OCI-LY7 (cell line): ENCODE measurements at regions of chr5 and their contacts with region 1.

Region 1: GRCh38 chr5:115841382-115842088 is at the starts of genes AP3S1 and ATG12:
- DNase-seq: peak; percentile 95
- H3K4me3 ChIP-seq: peak within 1 kb of the TSS; percentile 90
- H3K27ac ChIP-seq: peak within 1 kb of the TSS; percentile 80
- H3K4me1 ChIP-seq: peaks cover 57% of the 10 kb centered on the region
- CTCF ChIP-seq: no peak
- total RNA-seq, gene AP3S1: 76.0 and 111 TPM in 2 replicates
- total RNA-seq, gene ATG12: 38.0 and 52.1 TPM in 2 replicates

Region 2: DNA sequence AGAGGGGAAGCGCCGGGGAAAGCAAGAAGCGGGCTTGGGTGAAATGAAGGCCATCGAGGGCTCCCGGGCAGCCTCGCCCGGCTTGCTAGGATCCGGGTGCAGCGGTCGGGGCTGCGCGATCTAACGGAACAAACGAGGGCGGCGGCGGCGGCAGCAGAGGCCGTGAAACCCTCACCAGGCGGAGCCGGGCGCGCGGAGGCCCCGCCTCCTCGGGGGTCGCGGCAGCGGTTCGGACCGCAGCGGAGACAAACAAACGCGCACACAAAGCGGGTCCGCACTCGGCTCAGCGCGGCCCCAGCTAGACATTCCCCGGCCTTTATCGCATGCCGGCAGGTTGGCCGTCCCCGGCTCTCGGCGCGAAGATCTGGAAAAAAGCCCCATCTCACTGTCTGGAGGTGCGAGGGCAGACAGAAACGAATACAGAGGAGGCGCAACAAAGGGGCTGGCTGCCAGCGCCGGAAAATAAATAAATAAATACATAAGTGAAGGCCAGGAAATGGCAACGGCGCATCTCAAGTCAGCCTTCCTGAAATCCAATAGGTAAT is 661.3 kb before region 1 on chr5:
- CTCF ChIA-PET with region 1: no interaction called
- POLR2A ChIA-PET with region 1: no interaction called
- intact Hi-C with region 1: no loop called
- DNase-seq: no peak
- H3K4me3 ChIP-seq: peak overlapping the region; percentile 36
- H3K27ac ChIP-seq: no peak overlapping the region
- H3K4me1 ChIP-seq: peaks cover 5% of the 10 kb centered on the region
- CTCF ChIP-seq: no peak

Region 3: DNA sequence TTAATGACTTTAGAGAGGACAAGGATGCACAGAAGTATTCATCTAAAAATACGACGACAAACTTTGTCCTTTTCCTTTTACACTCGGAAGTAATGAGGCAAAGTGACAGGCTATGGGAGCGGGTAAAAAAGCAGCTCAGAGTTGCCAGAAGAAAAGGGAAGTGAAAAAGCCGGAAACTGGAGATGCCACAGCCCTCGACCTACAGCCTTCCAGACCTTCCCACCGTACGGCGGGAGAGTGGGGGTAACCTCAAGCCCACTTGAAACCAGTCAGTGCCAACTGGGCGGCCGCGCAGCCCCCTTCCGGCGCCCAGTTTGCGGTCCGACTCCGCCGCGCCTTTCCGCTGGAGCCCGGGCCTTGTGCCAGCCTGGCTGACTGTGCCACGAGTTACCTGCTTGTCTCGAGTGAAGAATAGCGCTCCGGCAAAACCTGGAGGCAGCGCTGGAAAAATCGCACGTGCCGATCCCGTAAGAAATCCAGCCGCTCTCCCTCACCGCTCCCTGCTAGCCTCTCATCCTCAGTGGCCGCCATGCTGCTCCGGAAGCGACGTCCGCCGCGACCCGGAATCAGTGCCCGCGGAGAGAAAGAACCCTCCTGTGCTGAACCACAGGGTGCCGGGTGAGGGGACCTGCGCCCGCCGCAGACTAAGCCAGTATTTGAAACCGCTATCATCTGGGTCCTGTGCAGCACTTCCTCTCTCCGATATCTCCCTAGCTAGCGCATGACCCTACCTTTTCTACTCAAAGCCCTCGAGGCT is 579.0 kb before region 1 on chr5 and contains the start of gene PGGT1B:
- CTCF ChIA-PET with region 1: no interaction called
- POLR2A ChIA-PET with region 1: no interaction called
- intact Hi-C with region 1: loop called (anchors 2 kb)
- DNase-seq: peak; percentile 82
- H3K4me3 ChIP-seq: peak within 1 kb of the TSS; percentile 83
- H3K27ac ChIP-seq: peak within 1 kb of the TSS; percentile 70
- H3K4me1 ChIP-seq: peaks cover 34% of the 10 kb centered on the region
- CTCF ChIP-seq: no peak
- total RNA-seq, gene PGGT1B: 17.8 and 19.7 TPM in 2 replicates

Region 4: DNA sequence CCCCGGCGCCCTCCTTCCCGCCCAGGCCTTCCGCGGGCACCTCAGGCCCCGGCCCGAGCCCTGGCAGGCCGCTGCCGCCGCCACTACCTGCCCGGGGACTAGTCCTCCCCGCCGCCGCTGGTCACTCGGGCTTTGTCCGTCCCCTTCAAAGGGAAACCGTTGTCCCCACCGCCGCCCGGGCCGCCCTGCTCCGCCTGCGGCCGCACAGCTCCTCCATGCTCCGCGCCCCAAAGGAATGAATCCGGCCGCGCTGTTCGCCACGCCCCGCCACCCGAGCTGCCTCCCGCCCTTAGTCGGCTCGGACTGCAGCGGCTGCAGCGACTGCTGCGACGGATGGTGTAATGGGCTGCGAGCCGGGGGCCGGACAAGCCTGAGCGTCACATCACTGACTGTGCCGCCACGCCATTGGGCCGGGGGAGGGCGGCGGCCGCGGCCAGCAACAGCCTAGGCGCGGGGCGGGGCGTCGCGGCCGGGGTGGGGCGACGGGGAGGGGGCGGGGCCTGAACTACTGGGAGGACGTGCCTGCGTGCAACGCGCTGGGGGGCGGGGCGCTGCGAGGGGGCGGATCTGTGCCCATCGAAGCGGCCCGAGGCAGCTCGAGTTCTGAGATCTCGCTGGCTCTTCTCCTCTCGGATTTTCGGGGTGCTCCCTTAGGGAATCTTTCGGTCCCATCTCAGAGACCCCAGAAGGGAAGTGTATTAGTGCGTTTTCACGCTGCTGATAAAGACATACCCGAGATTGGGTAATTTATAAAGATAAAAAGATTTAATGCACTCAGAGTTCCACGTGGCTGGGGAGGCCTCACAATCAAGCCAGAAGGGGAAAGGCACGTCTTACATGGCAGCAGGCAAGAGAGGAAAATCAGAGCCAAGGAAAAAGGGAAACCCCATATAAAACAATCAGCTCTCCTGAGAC is 296.8 kb before region 1 on chr5 and contains the start of gene FEM1C:
- CTCF ChIA-PET with region 1: no interaction called
- POLR2A ChIA-PET with region 1: interaction called, 5 read pairs
- intact Hi-C with region 1: loop called (anchors 2 kb)
- DNase-seq: peak; percentile 96
- H3K4me3 ChIP-seq: peak within 1 kb of the TSS; percentile 92
- H3K27ac ChIP-seq: peak within 1 kb of the TSS; percentile 79
- H3K4me1 ChIP-seq: peaks cover 29% of the 10 kb centered on the region
- CTCF ChIP-seq: no peak
- total RNA-seq, gene FEM1C: 4.6 and 5.6 TPM in 2 replicates

Region 5: DNA sequence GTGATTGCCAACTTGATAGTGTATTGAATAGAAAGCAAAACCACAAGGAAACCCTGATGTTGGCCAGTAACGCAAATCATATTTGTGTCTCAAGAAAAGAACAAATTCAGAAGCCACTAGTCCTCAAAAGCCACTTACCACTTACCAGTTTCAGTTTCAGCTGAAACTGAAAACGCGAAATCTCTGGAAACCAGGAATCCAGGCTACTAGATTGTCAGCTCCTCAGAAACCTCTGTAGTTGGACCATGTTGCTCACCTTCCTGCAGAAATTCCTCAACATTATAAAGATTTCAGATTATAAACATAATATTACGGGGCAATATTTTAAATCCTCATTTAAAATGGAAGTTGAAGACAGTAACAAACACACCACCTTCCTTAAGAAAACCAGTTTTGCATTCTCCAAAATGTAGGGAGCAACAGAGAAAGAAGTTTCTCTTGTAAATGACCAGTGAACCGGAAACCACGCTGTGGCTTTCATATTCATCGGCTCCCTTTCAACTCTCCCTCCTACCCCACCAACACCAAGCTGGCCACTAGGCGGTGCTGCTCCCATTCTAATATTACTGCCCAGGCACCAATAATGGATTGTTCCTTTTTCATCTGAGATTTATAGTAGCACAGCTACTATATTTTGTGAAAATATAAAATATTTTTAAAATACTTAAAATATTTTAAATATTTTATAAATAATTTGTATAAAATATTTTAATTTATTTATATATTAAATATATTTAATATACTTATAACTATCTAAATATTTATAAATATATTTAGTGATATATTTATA is 207.0 kb before region 1 on chr5:
- CTCF ChIA-PET with region 1: no interaction called
- POLR2A ChIA-PET with region 1: interaction called, 6 read pairs
- intact Hi-C with region 1: loop called (anchors 2 kb)
- DNase-seq: peak; percentile 86
- H3K4me3 ChIP-seq: peak overlapping the region; percentile 15
- H3K27ac ChIP-seq: no peak overlapping the region
- H3K4me1 ChIP-seq: peaks cover 8% of the 10 kb centered on the region
- CTCF ChIP-seq: peak; percentile 95

Region 6: DNA sequence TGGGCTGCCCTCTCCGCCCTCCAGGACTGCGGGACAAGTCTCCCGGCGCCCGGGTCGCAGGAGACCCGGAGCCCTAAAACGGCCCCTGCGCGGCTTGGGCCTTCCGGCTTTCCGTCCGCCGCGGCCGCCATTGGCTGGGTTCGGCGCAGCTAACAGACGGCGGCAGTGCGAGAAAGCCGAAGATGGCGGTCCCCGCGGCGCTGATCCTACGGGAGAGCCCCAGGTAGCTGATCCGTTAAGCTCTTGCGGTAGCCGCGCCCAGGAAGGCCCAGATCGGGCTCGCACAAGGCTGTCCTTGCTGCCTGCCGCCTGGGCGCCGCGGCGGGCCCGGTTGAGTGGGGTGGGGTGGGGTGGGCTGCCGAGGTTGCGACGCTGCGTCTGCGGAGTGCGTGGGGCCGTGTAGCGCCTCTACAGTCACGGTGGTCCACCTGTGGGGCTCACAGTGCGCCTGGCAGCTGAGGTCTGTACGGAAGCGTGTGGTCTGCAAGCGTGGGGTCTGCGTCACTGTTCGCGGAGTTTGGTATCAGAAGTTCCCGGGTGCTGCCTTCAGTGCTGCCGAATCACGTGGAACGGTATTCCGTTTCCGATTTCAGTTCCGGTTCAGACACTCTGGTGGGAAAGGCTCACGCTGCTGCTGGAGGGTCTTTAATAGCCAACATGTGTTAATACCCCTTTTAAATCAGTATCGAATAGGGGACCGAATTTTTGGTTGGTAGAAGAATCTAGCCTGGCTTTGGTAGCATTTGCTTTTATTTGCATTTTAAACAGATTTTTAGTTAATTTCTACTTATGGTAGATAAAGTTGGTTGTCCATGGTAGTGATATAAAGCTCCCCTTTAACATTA is 243.6 kb after region 1 on chr5 and contains the start of gene COMMD10:
- CTCF ChIA-PET with region 1: no interaction called
- POLR2A ChIA-PET with region 1: interaction called, 3 read pairs
- intact Hi-C with region 1: loop called (anchors 2 kb)
- DNase-seq: peak; percentile 76
- H3K4me3 ChIP-seq: peak within 1 kb of the TSS; percentile 76
- H3K27ac ChIP-seq: no peak within 1 kb of the TSS
- H3K4me1 ChIP-seq: peaks cover 8% of the 10 kb centered on the region
- CTCF ChIP-seq: no peak
- total RNA-seq, gene COMMD10: 11.0 and 15.7 TPM in 2 replicates